Activated CD4-positive, alpha-beta memory T cell treated with anti-CD3 and anti-CD28 coated beads, Interleukin-2, amount 10 ng/mL, durations not matched to agents 7 days and 5 days (primary cell): ENCODE measurements at regions of chr17 and their contacts with region 1.

Region 1: GRCh38 chr17:82507631-82508175 is 11.8 kb upstream of the FOXK2 start:
- DNase-seq: no peak
- H3K4me3 Mint-ChIP-seq: no peak overlapping the region
- H3K27ac Mint-ChIP-seq: no peak overlapping the region
- H3K4me1 Mint-ChIP-seq: peaks cover 19% of the 10 kb centered on the region
- H3K27me3 Mint-ChIP-seq: no peaks in the 10 kb centered on the region

Region 2: GRCh38 chr17:82494236-82495055 is 13.3 kb before region 1 on chr17:
- CTCF ChIA-PET with region 1: no interaction called
- POLR2A ChIA-PET with region 1: interaction called, 11 read pairs
- DNase-seq: peak; percentile 93
- H3K4me3 Mint-ChIP-seq: peak overlapping the region; percentile 58
- H3K27ac Mint-ChIP-seq: peak overlapping the region; percentile 80
- H3K4me1 Mint-ChIP-seq: peaks cover 48% of the 10 kb centered on the region
- H3K27me3 Mint-ChIP-seq: no peaks in the 10 kb centered on the region